Transverse colon (tissue), 4 donors: ENCODE measurements at regions of chr10 and their contacts with region 1.

Region 1: DNA sequence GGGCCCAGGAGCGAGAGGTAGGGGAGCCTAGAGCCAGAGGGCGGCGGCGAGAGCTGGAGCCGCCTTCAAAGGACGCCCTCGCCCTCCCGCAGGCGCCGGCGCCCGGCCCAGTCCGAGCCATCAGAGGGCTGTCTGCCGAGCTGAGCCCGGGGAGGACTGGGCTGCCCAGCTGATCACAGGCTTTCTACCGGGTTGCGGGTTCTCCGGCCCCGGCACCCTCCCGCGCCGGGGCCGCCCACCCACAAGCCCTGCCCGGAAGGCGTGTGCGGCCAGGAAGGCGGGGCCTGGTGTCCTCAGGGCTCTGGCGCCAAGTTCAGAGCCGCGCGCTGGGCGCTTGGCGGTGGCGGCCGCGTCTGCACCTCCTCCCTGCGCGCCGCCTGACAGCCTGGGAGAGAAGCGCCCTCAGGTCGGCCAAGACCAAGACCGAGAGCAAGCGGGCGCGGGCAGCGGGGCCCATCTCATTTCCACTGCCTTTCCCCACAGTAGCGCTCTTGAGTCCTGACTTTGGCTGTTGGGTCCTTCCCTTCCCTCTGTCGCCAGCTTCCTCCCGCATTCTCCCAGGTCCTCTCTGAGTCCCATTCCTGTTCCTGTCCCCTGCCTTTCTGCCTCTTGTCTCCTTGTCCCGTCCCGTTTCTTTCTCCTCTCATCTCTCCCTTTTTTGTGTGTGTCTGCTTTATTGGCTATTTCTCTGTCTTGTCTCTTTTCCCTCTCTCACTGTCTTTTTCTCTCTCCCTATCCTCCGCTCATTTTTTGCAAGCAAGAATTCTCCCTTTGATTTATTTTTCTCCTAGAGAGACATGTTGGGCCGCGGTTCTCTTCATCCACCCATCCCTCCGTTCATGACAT is 60.6 kb upstream of the MSMB start:
- DNase-seq: peak; percentile 48
- H3K4me3 ChIP-seq: peak overlapping the region; percentile 33 to 69 (median 50)
- H3K27ac ChIP-seq: peak overlapping the region in 2 of 4 donors; percentile 25 to 44
- H3K4me1 ChIP-seq: peaks cover 0 to 9% (median 4%) of the 10 kb centered on the region in 4 donors
- H3K27me3 ChIP-seq: peaks cover 14% of the 10 kb centered on the region
- CTCF ChIP-seq: peak in 3 of 5 experiments; percentile 14 to 47 (median 23)
- EP300 ChIP-seq: no peak
- POLR2A ChIP-seq: no peak

Region 2: GRCh38 chr10:46284293-46285229 is 177.9 kb after region 1 on chr10:
- in situ Hi-C with region 1: no loop called
- intact Hi-C with region 1: loop called (anchors 2 kb)
- DNase-seq: peak; percentile 93
- H3K4me3 ChIP-seq: peak overlapping the region; percentile 35 to 72 (median 70)
- H3K27ac ChIP-seq: peak overlapping the region; percentile 76 to 88 (median 80)
- H3K4me1 ChIP-seq: peaks cover 15 to 27% (median 25%) of the 10 kb centered on the region in 4 donors
- H3K27me3 ChIP-seq: no peaks in the 10 kb centered on the region
- CTCF ChIP-seq: no peak
- EP300 ChIP-seq: no peak
- POLR2A ChIP-seq: peak; percentile 31

Region 3: GRCh38 chr10:47384148-47384921 is 1277.7 kb after region 1 on chr10 and contains the start of gene ZNF488:
- in situ Hi-C with region 1: loop called in 3 of 4 experiments (anchors 5 to 10 kb)
- intact Hi-C with region 1: no loop called
- DNase-seq: peak; percentile 87
- H3K4me3 ChIP-seq: peak within 1 kb of the TSS; percentile 58 to 95 (median 70)
- H3K27ac ChIP-seq: peak within 1 kb of the TSS; percentile 76 to 85 (median 82)
- H3K4me1 ChIP-seq: peaks cover 0 to 29% (median 16%) of the 10 kb centered on the region in 4 donors
- H3K27me3 ChIP-seq: no peaks in the 10 kb centered on the region
- CTCF ChIP-seq: no peak
- EP300 ChIP-seq: no peak
- POLR2A ChIP-seq: no peak
- total RNA-seq, gene ZNF488: 0.41 to 0.80 TPM in 2 of 4 donors, not detected in the others